AG04449 (cell line): ENCODE measurements at regions of chr13 and their contacts with region 1.

Region 1: DNA sequence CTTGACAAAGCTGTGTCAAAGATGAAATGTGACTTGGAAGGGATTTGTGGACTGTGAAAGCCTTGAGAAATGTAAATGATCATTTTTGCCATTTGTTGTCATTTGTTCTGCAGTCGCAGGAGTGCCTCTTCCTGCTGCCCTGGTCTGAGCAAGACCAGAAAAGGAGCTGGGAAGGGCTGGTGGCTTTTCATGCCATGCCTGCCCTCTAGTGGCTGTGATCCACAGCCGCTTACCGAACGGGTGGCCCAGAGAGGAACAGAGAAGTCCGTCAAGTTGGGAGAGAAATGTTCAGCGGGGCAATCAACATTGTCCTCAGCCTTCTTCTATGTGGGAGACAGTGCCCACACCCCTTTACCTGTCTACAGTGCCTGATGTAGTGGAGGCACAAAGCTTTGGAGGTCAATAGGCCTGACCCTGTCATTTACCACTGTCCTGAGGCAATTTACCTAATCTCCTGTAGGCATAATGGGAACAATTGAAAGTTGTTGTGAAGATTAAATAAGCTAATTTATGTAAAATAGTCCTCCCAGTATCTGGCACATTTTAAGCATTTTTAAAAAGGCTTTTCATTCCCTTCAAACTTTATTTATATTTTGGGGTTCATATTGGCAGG is 224.4 kb downstream of the B3GLCT start:
- DNase-seq: peak; percentile 23
- H3K4me3 ChIP-seq: no peak overlapping the region
- CTCF ChIP-seq: peak; percentile 91

Region 2: GRCh38 chr13:30932481-30933353 is 491.5 kb before region 1 on chr13 and contains the start of gene TEX26:
- CTCF ChIA-PET with region 1: no interaction called
- POLR2A ChIA-PET with region 1: no interaction called
- DNase-seq: no peak
- H3K4me3 ChIP-seq: no peak within 1 kb of the TSS
- CTCF ChIP-seq: peak; percentile 14

Region 3: GRCh38 chr13:31174018-31174417 is 250.2 kb before region 1 on chr13:
- CTCF ChIA-PET with region 1: interaction called, 50 read pairs
- POLR2A ChIA-PET with region 1: no interaction called
- DNase-seq: no peak
- H3K4me3 ChIP-seq: no peak overlapping the region
- CTCF ChIP-seq: peak; percentile 22

Region 4: DNA sequence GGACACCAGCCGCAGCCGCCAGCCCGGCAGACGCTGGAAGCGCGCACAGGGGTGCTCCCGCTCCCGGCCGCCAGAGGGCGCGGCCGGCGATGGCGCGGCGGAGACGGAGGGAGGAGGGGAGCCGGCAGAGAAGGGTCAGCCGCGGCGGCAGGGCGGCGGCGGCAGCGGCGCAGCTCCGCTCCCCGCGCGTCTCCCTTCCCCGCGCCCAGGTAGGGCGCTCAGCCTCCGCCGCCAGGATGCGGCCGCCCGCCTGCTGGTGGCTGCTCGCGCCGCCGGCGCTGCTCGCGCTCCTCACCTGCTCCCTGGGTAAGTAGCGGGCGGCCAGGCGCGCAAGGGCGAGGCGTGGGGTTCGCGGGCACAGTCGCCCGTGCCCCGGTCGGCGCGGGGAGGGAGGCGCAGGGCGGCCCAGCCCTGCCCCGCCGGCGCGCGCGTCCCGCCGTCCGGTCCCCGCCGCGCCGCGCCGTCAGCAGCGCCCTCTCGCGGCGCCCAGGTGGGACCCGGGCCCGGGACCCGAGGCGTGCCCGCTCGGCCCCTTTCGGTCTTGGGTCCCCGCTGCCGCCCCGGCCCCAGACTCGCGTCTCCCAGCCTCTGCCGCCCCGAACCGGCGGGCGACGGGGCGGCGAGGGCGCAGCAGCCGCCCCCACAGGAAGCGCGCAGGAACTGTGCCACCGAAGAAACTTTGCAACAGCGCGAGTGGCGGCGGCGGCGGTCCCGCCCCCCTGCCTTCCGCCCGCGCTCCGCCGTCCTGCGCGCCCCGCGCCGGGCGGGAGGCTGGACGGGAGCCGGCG is 224.2 kb before region 1 on chr13 and contains the start of gene B3GLCT:
- CTCF ChIA-PET with region 1: interaction called, 30 read pairs
- POLR2A ChIA-PET with region 1: interaction called, 3 read pairs
- DNase-seq: no peak
- H3K4me3 ChIP-seq: peak within 1 kb of the TSS; percentile 70
- CTCF ChIP-seq: peak; percentile 89

Region 5: GRCh38 chr13:31409678-31410356 is 14.4 kb before region 1 on chr13:
- CTCF ChIA-PET with region 1: interaction called, 27 read pairs
- POLR2A ChIA-PET with region 1: no interaction called
- DNase-seq: no peak
- H3K4me3 ChIP-seq: no peak overlapping the region
- CTCF ChIP-seq: no peak

Region 6: DNA sequence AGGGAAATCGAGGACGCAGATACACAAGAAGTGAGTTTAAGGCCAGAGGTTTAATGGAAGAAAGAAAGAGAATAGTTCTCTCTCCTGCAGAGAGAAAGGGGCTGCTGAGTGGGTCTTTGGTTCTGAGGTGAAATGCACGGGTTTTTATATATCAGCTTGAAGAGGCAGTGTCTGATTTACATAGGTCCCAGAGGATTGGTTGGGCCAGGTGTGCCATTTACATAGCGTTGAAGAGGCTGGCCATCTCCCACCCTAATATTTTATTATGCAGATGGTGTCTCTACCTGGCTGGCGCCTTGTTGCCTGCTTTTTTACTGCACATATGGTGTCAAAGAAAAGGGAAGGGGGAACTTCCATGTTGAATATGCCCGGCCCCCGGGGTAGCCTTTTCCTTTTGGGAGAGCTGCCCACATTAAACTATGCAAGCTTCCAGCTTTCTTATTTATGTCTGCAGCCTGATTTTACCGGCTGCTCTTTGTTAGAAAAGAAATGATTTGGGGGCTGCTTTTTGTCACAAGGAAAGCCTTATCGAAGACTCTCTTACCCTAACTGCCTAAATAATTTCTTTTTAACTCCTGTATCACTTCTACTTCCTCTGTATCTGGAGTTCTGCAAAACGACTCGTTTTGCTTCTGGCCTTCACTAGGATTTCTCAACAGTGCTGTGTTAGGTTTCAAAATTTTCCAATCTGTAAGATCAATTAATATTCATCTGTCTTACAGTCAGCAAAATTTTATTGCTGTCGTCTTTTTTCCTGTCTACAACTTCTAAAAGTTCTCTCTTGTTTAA is 44.1 kb after region 1 on chr13:
- CTCF ChIA-PET with region 1: no interaction called
- POLR2A ChIA-PET with region 1: no interaction called
- DNase-seq: no peak
- H3K4me3 ChIP-seq: no peak overlapping the region
- CTCF ChIP-seq: no peak

Region 7: DNA sequence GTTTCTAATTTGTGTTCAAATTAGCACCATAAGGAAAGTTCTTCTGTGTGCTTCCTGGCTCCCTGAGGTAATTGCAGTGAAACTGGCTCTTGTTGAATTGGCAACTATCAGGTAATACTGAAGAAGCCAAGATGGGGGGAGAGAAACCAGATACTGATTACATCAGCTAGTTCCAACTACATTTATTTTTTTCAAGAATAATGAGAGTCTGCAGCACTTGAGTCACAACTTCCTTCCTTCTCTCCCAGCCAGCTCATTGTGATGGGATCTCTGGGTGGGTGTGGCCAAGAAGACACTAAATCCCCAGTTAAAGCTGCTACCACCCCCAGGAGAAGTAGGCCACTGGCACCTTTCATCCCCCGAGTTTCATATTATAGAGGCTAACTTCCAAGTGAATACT is 214.4 kb after region 1 on chr13:
- CTCF ChIA-PET with region 1: no interaction called
- POLR2A ChIA-PET with region 1: no interaction called
- DNase-seq: no peak
- H3K4me3 ChIP-seq: no peak overlapping the region
- CTCF ChIP-seq: no peak

Region 8: DNA sequence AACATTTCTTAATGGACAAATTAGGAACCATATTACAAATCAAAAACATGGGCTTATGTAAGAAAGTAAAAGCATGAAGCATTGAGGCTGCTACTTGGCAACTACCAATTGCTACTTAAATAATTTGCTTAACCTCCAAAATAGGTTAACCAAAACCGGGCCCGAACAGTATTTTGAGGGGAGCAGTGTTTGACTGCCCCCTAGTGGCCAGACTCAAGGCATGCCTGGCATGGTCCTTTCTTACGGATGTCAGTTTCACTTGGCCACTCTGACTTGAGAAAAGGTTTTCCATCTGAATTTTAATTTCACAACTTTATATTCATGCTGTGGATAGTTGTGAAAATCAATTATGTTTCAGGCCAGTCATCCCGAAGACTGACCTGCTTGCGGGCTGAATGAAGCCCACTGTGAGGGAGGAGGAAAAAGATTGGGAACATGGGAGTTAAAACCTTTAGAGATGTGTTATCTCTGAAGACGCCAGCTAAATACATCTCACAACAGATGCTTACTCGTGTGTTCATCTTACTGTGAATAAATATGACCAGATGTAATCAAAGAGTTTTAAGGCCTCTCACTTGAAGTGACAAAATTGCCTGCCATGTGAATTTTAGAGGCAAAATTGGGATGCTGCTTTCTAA is 318.0 kb after region 1 on chr13:
- CTCF ChIA-PET with region 1: interaction called, 19 read pairs
- POLR2A ChIA-PET with region 1: no interaction called
- DNase-seq: no peak
- H3K4me3 ChIP-seq: no peak overlapping the region
- CTCF ChIP-seq: peak; percentile 82

Region 9: GRCh38 chr13:31747291-31747690 is 323.1 kb after region 1 on chr13:
- CTCF ChIA-PET with region 1: interaction called, 19 read pairs
- POLR2A ChIA-PET with region 1: no interaction called
- DNase-seq: no peak
- H3K4me3 ChIP-seq: no peak overlapping the region
- CTCF ChIP-seq: no peak

Region 10: DNA sequence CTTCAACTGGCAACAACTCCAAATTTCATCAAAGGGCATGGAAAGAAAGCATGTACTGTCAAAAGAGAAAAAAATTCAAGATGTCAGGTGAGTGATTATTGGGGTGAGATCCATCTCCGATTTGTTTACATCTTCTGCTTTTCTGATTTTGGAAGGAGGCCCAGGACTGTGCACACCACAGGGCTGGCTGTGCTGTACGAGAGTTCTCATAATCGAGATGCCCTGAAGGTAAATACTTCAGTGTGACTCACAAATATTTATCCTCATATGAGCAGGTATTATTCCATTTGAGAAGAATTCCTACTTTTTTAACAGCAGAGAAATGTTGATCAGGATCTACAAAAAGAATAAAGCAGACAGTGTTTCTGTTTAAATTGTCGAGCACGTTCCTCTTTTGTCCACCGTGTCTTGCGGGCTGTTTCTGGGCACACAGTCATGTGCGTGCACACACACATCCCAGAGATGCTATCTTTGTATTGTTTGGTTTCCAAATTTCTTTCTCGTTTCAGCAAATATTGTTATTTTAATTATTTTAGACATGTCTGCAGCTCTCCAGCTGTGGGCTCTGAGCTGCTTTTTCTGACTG is 1695.7 kb after region 1 on chr13:
- CTCF ChIA-PET with region 1: no interaction called
- POLR2A ChIA-PET with region 1: no interaction called
- DNase-seq: no peak
- H3K4me3 ChIP-seq: no peak overlapping the region
- CTCF ChIP-seq: no peak